ENCODE measurements at regions of chr2 and their contacts with region 1.

Region 1: DNA sequence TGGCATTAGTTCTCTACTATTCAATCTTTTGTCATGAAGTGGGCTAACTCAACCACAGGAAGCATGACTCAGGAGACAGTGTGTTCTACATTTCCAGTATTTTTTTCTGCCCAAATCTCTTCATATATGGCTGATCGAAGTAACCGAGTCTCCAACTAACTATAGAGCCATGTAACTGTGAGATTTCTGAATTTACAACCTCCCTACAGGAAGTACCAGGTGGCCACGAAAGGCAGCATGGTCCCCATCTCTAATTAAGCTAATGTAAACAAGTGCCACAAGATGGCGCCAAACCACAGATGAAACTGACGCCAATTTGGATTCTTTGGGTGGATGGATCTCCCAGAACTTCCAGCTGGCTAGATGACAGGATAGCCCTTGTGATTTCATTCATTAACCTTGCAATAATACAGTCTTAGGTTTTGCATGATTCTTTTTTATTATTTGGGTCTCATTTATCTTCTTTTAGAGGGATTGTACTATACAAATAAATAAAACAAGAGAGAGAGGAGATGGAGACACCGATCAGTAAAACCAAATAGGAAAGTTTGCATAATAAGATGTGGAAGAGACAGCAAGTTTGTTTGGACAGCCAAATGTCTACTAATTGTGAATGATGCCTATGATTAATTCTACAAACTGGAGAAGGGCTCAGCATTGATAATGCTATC is 18.3 kb upstream of the ARHGAP15 start:
- DNase-seq: peak; percentile 37 to 80 (median 42)
- ATAC-seq: peak; percentile 85
- H3K4me3 ChIP-seq: no peak overlapping the region
- H3K27ac ChIP-seq: no peak overlapping the region
- H3K4me1 ChIP-seq: no peaks in the 10 kb centered on the region
- H3K27me3 ChIP-seq: no peaks in the 10 kb centered on the region
- CTCF ChIP-seq: peak; percentile 62 to 71 (median 65)
- EP300 ChIP-seq: no peak
- POLR2A ChIP-seq: no peak
- RAD21 ChIP-seq: peak; percentile 69 to 71

Region 2: DNA sequence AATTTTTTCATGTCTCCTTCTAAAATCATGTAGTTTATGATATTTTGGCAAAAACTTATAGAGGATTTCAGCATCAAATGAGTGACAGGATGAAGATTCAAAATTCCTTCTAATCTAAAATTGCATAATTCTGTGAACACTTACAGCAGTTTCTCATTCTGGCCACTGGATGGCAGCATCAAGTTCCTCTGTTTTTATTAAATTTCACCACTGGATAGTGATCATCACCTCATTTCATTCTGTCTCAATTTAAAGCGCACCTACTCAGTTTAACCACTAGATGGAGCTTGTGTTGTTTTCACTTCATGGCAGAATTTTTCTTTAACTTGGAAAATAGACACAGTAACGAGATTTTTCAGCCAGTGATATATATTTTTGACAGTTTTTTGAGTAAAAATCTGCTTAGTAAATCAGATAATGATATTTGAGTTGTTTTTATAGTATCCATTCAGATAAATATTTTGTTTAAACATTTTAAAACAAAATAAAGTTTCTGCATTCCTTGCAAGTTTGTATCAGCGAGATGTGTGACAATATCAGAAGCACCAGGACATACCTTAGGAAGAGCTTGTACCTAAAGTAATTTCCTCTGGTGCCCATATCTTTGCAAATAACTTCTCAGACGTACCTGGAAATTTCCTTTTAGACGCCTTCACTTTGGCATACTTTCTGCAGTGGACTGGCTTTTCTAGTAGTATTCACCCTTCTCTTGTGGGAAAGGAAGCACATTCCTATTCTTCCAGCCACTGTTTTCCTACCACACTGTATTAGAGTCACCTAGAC is 76.4 kb before region 1 on chr2:
- CTCF ChIA-PET with region 1: no interaction called
- POLR2A ChIA-PET with region 1: no interaction called
- in situ Hi-C with region 1: no loop called
- intact Hi-C with region 1: loop called (anchors 2 kb)
- DNase-seq: peak; percentile 57 to 81 (median 71)
- ATAC-seq: peak; percentile 85
- H3K4me3 ChIP-seq: no peak overlapping the region
- H3K27ac ChIP-seq: no peak overlapping the region
- H3K4me1 ChIP-seq: no peaks in the 10 kb centered on the region
- H3K27me3 ChIP-seq: no peaks in the 10 kb centered on the region
- CTCF ChIP-seq: peak; percentile 90 to 98 (median 94)
- EP300 ChIP-seq: no peak
- POLR2A ChIP-seq: no peak
- RAD21 ChIP-seq: peak; percentile 75 to 77

Region 3: GRCh38 chr2:143217512-143218115 is 106.7 kb after region 1 on chr2:
- CTCF ChIA-PET with region 1: interaction called, 3 read pairs
- POLR2A ChIA-PET with region 1: interaction called, 4 read pairs
- in situ Hi-C with region 1: no loop called
- intact Hi-C with region 1: loop called (anchors 1 kb)
- DNase-seq: peak in 1 of 4 experiments; percentile 18
- ATAC-seq: no peak
- H3K4me3 ChIP-seq: no peak overlapping the region
- H3K27ac ChIP-seq: no peak overlapping the region
- H3K4me1 ChIP-seq: no peaks in the 10 kb centered on the region; a peak in 1 of 5 replicates
- H3K27me3 ChIP-seq: no peaks in the 10 kb centered on the region
- CTCF ChIP-seq: no peak
- EP300 ChIP-seq: no peak
- POLR2A ChIP-seq: no peak
- RAD21 ChIP-seq: no peak